ENCODE measurements at regions of chr2 and their contacts with region 1.

Region 1: DNA sequence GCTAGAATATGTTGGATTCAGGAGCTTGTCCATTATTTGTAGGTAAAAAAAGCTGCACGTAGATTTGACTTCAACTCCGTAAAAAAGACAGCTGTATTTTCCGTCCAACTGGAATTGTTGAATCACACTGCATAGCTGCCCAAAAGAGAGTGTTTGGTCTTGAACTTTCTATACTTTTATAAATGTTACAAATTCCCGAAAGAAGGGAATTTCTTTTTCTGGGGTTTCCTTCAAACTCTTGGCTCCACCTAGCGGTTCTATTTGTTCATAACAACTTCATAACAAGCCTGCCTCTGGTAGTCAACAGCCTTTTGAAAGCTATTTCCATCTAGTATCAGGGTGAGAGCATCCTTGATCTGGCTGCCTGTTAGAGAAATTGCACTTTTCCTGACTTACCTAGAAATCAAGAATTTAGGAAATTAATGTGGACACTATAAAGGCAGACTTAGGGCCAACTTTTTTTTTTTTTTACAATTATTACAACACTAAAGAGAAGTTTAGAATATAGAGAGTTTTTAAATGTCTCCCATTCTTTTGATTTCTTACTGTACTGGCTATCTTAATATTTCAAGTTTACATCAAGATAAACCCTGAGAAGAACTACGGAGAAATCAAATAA is 48.1 kb downstream of the TMEM185B start:
- DNase-seq: no peak
- ATAC-seq: no peak
- H3K4me3 Mint-ChIP-seq: no peak overlapping the region
- H3K27ac Mint-ChIP-seq: peak overlapping the region; percentile 37
- H3K4me1 Mint-ChIP-seq: peaks cover 47% of the 10 kb centered on the region
- H3K27me3 Mint-ChIP-seq: no peaks in the 10 kb centered on the region

Region 2: GRCh38 chr2:119678998-119679710 is 495.9 kb before region 1 on chr2 and contains the start of gene TMEM177:
- CTCF ChIA-PET with region 1: interaction called, 12 read pairs
- DNase-seq: peak; percentile 93
- ATAC-seq: peak; percentile 97
- H3K4me3 Mint-ChIP-seq: peak within 1 kb of the TSS; percentile 81
- H3K27ac Mint-ChIP-seq: peak within 1 kb of the TSS; percentile 69
- H3K4me1 Mint-ChIP-seq: peaks cover 17% of the 10 kb centered on the region
- H3K27me3 Mint-ChIP-seq: no peaks in the 10 kb centered on the region
- total RNA-seq, gene TMEM177: 10.5 to 11.8 TPM

Region 3: DNA sequence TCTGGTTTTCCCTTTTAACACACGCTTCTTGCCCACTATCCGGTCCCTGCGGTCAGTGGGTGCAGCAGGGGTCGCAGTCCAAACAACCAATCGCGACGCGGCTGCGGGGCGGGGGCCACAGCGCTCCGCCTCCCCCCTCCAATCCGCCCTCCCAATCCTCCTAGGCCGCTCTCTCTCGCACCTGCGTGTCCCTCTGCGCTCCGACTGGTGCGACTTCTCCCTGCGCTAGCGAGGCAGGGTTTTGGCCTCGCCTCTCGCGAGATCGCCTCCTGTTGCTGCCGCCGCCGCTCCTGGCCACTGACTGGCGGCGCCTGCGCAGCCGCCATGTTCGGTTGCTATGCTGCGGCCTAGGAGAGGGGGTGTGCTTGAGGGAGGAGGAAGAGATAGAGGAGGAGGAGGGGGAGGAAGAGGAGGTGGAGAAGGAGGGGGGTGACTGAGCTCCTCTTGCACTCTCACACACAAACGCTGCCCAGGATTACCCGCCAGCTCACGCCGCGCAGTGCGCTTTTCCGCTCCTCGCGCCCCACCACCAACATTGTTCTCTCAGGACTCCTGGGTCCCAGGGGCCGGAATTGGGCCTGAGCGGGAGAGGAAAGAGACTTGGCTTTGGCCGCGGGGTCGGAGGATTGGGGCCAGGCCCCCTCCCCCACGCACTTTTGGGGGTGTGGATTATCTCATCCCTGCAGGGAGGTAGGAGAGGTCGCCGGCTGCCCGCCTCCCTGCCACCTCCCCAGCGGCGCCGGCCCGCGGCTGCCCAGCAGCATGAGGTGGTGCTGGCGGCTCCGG is 415.4 kb before region 1 on chr2 and contains the start of gene PTPN4:
- CTCF ChIA-PET with region 1: interaction called, 67 read pairs
- DNase-seq: peak; percentile 99
- ATAC-seq: peak; percentile 95
- H3K4me3 Mint-ChIP-seq: peak within 1 kb of the TSS; percentile 91
- H3K27ac Mint-ChIP-seq: peak within 1 kb of the TSS; percentile 94
- H3K4me1 Mint-ChIP-seq: peaks cover 41% of the 10 kb centered on the region
- H3K27me3 Mint-ChIP-seq: no peaks in the 10 kb centered on the region
- total RNA-seq, gene PTPN4: 76.4 to 92.2 TPM

Region 4: GRCh38 chr2:120012771-120013596 is 162.1 kb before region 1 on chr2 and contains the start of gene EPB41L5:
- CTCF ChIA-PET with region 1: interaction called, 19 read pairs
- DNase-seq: peak; percentile 89
- ATAC-seq: peak; percentile 98
- H3K4me3 Mint-ChIP-seq: peak within 1 kb of the TSS; percentile 76
- H3K27ac Mint-ChIP-seq: no peak within 1 kb of the TSS
- H3K4me1 Mint-ChIP-seq: peaks cover 13% of the 10 kb centered on the region
- H3K27me3 Mint-ChIP-seq: peaks cover 8% of the 10 kb centered on the region
- total RNA-seq, gene EPB41L5: 1.9 to 2.2 TPM

Region 5: DNA sequence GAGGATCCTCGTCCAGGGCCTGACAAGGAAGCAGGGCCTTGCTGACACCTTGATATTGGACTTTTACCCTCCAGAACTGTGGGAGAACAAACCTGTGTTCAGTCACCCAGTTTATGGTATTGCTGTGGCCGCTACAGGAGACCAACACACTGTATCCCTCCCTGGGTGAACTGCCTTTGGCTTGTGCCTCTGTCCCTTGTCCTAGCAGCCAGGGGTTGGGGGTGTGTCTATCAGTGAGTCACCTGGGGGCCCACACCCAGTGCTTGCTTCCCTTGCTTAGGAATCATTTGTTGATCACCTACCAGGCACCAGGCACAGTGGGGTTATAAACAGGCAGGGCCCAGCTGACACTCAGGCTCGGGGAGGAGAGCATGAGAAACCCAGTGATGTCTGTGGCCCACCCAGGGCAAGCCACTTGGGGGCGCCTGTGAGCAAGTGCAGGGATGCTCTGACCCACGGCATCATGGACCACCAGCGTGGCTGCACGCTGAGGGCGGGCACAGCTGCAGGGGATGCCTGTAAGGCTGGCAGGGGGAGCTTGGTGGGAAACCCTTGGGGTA is 31.0 kb after region 1 on chr2:
- CTCF ChIA-PET with region 1: interaction called, 10 read pairs
- DNase-seq: peak; percentile 68
- ATAC-seq: peak; percentile 67
- H3K4me3 Mint-ChIP-seq: no peak overlapping the region
- H3K27ac Mint-ChIP-seq: no peak overlapping the region
- H3K4me1 Mint-ChIP-seq: peaks cover 8% of the 10 kb centered on the region
- H3K27me3 Mint-ChIP-seq: no peaks in the 10 kb centered on the region

Measured in activated CD8-positive, alpha-beta memory T cell treated with anti-CD3 and anti-CD28 coated beads, Interleukin-2, amount 10 ng/mL, durations not matched to agents 7 days and 5 days (primary cell).